A673 (cell line): ENCODE measurements at regions of chr9 and their contacts with region 1.

Region 1: GRCh38 chr9:36166101-36166927 is 2.9 kb upstream of the CCIN start:
- DNase-seq: peak; percentile 87
- H3K4me3 ChIP-seq: peak overlapping the region; percentile 49
- H3K27ac ChIP-seq: no peak overlapping the region
- H3K4me1 ChIP-seq: peaks cover 6% of the 10 kb centered on the region
- H3K27me3 ChIP-seq: no peaks in the 10 kb centered on the region
- CTCF ChIP-seq: peak; percentile 97

Region 2: GRCh38 chr9:35910613-35911359 is 255.5 kb before region 1 on chr9:
- CTCF ChIA-PET with region 1: no interaction called
- POLR2A ChIA-PET with region 1: no interaction called
- intact Hi-C with region 1: no loop called
- DNase-seq: peak; percentile 75
- H3K4me3 ChIP-seq: no peak overlapping the region
- H3K27ac ChIP-seq: peak overlapping the region; percentile 50
- H3K4me1 ChIP-seq: peaks cover 36% of the 10 kb centered on the region
- H3K27me3 ChIP-seq: no peaks in the 10 kb centered on the region
- CTCF ChIP-seq: peak; percentile 68

Region 3: GRCh38 chr9:35954942-35955546 is 211.3 kb before region 1 on chr9:
- CTCF ChIA-PET with region 1: interaction called, 9 read pairs
- POLR2A ChIA-PET with region 1: no interaction called
- intact Hi-C with region 1: loop called (anchors 5 kb)
- DNase-seq: peak; percentile 77
- H3K4me3 ChIP-seq: no peak overlapping the region
- H3K27ac ChIP-seq: no peak overlapping the region
- H3K4me1 ChIP-seq: no peaks in the 10 kb centered on the region
- H3K27me3 ChIP-seq: peaks cover 25% of the 10 kb centered on the region
- CTCF ChIP-seq: peak; percentile 89

Region 4: GRCh38 chr9:36008774-36009300 is 157.5 kb before region 1 on chr9:
- CTCF ChIA-PET with region 1: interaction called, 6 read pairs
- POLR2A ChIA-PET with region 1: no interaction called
- intact Hi-C with region 1: loop called (anchors 5 kb)
- DNase-seq: peak; percentile 89
- H3K4me3 ChIP-seq: no peak overlapping the region
- H3K27ac ChIP-seq: no peak overlapping the region
- H3K4me1 ChIP-seq: no peaks in the 10 kb centered on the region
- H3K27me3 ChIP-seq: peaks cover 66% of the 10 kb centered on the region
- CTCF ChIP-seq: peak; percentile 100

Region 5: DNA sequence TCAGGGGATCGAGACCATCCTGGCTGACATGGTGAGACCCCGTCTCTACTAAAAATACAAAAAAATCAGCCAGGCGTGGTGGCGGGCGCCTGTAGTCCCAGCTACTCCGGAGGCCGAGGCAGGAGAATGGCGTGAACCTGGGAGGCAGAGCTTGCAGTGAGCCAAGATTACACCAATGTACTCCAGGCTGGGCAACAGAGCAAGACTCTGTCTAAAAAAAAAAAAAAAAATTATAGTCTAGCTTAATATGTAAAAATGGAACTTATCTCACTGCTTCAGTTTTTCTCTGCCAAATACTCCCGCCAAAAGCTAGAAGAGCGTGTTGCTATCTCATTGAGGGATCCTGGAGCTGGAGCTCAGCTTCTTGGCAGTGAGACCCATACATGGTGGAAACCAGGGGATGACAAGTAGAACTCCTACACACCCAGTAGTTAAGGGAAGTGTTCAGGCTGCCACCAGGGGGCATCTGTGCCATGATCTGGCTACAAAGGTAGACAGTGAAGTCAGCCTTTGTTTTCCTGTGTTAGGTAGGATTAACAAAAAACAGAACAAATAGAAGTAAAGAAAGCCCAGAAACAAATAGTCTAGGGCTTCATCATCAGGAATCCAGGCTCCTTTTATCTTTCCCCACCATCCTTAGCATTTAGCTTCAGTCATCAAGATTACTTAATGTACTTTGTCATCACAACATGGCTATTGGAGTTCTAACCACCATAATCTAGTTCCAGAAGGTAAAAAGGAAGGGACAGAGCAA is 63.4 kb before region 1 on chr9:
- CTCF ChIA-PET with region 1: interaction called, 5 read pairs
- POLR2A ChIA-PET with region 1: no interaction called
- intact Hi-C with region 1: loop called (anchors 1 kb)
- DNase-seq: peak; percentile 85
- H3K4me3 ChIP-seq: no peak overlapping the region
- H3K27ac ChIP-seq: no peak overlapping the region
- H3K4me1 ChIP-seq: no peaks in the 10 kb centered on the region
- H3K27me3 ChIP-seq: no peaks in the 10 kb centered on the region
- CTCF ChIP-seq: peak; percentile 92